Activated CD8-positive, alpha-beta T cell treated with anti-CD3 and anti-CD28 coated beads, Interleukin-2, amount 10 ng/mL, durations not matched to agents 7 days and 5 days (primary cell): ENCODE measurements at regions of chr7 and their contacts with region 1.

Region 1: DNA sequence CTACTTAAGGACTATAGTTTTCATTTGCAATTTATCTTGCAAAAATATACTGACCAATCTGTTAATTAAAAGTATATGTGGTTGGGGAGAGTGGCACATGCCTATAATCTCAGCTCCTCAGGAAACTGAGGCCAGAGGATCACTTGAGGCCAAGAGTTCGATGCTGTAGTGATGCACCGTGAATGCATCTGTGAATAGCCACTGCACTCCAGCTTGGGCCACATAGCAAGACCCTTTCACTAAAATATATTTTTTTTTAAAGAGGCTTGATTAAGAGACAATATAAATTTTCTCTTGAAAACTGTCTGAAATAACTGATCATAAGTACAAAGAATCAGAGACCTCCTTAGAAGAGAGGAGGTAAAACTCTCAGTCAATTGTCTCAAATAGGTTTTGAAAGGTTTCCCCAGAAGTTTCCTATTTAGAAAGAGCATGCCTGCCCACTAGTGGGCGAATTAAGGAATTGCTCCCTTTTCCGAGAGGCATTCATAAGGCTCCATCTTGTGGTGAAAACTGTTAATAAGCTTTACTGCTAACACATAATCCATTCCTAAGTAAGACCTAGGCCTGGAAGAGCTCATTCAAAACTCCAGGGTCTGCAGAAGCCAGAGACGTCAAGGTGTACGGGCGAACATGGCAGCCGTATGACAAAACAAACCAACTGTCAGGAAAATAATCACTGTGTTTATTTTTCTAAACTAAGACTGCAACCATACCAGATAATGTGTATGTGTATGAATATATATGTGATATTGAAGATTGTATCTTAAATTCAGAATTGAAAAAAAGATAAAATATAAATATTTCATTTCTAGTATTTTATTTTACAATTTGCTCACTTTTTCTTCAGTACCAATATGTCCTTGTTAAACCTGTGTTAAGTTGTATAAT is 6.8 kb upstream of the TAS2R40 start:
- DNase-seq: peak; percentile 79
- ATAC-seq: peak; percentile 85
- H3K4me3 Mint-ChIP-seq: no peak overlapping the region
- H3K27ac Mint-ChIP-seq: no peak overlapping the region
- H3K4me1 Mint-ChIP-seq: no peaks in the 10 kb centered on the region
- H3K27me3 Mint-ChIP-seq: peaks cover 6% of the 10 kb centered on the region

Region 2: GRCh38 chr7:142998966-142999365 is 216.1 kb before region 1 on chr7:
- CTCF ChIA-PET with region 1: interaction called, 333 read pairs
- POLR2A ChIA-PET with region 1: no interaction called
- DNase-seq: no peak
- ATAC-seq: no peak
- H3K4me3 Mint-ChIP-seq: no peak overlapping the region
- H3K27ac Mint-ChIP-seq: no peak overlapping the region
- H3K4me1 Mint-ChIP-seq: peaks cover 5% of the 10 kb centered on the region
- H3K27me3 Mint-ChIP-seq: peaks cover 6% of the 10 kb centered on the region

Region 3: DNA sequence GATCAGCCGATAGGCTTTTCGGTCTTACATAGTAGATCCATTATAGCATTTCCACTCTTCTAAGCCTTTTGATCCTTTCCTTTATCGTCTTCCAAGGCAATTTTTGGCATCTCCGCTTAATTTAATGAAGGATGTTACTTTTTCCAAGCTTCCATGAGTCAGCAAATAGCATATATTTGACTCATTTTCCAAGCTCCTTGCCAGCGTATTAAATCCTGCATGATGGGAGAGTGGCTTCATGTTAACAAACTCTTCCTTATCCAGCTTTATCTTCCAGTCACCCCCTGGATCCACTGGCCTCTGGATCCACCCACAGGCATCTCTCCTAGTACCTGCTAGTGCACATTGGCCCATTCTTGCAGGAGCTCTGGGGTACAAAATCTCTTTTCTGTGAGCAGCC is 201.1 kb before region 1 on chr7:
- CTCF ChIA-PET with region 1: interaction called, 333 read pairs
- POLR2A ChIA-PET with region 1: no interaction called
- DNase-seq: no peak
- ATAC-seq: no peak
- H3K4me3 Mint-ChIP-seq: no peak overlapping the region
- H3K27ac Mint-ChIP-seq: no peak overlapping the region
- H3K4me1 Mint-ChIP-seq: no peaks in the 10 kb centered on the region
- H3K27me3 Mint-ChIP-seq: peaks cover 21% of the 10 kb centered on the region

Region 4: DNA sequence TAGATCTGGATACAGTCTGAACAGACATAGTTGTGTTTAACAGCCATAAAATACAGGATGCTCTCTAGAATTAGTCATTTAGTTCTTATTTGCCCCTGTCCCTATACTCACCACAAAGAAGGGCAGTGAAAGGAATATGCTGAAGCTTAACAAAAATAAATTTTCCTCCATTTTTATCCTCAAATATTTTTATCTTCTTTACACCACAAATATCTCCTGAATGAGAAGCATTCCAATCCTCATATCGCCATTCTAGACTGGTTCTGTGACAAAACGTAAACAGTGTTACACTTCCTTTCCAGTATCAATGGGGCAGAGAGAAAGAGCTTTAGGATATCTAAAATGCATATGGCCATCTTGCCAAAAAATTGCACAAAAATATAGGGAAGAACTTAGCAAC is 189.7 kb before region 1 on chr7:
- CTCF ChIA-PET with region 1: interaction called, 10 read pairs
- POLR2A ChIA-PET with region 1: no interaction called
- DNase-seq: no peak
- ATAC-seq: no peak
- H3K4me3 Mint-ChIP-seq: no peak overlapping the region
- H3K27ac Mint-ChIP-seq: no peak overlapping the region
- H3K4me1 Mint-ChIP-seq: no peaks in the 10 kb centered on the region
- H3K27me3 Mint-ChIP-seq: peaks cover 3% of the 10 kb centered on the region

Region 5: GRCh38 chr7:143345428-143345900 is 130.4 kb after region 1 on chr7:
- CTCF ChIA-PET with region 1: no interaction called
- POLR2A ChIA-PET with region 1: no interaction called
- DNase-seq: peak; percentile 76
- ATAC-seq: peak; percentile 100
- H3K4me3 Mint-ChIP-seq: peak overlapping the region; percentile 65
- H3K27ac Mint-ChIP-seq: peak overlapping the region; percentile 53
- H3K4me1 Mint-ChIP-seq: peaks cover 9% of the 10 kb centered on the region
- H3K27me3 Mint-ChIP-seq: peaks cover 36% of the 10 kb centered on the region

Region 6: GRCh38 chr7:143479055-143479766 is 264.2 kb after region 1 on chr7:
- CTCF ChIA-PET with region 1: no interaction called
- POLR2A ChIA-PET with region 1: no interaction called
- DNase-seq: no peak
- ATAC-seq: no peak
- H3K4me3 Mint-ChIP-seq: no peak overlapping the region
- H3K27ac Mint-ChIP-seq: no peak overlapping the region
- H3K4me1 Mint-ChIP-seq: no peaks in the 10 kb centered on the region
- H3K27me3 Mint-ChIP-seq: peaks cover 2% of the 10 kb centered on the region